ENCODE measurements at regions of chr2 and their contacts with region 1.

Region 1: GRCh38 chr2:25606892-25607291 is 66.5 kb downstream of the DTNB start:
- DNase-seq: no peak
- ATAC-seq: no peak
- H3K4me3 Mint-ChIP-seq: no peak overlapping the region
- H3K27ac Mint-ChIP-seq: no peak overlapping the region
- H3K4me1 Mint-ChIP-seq: peaks cover 20% of the 10 kb centered on the region
- H3K27me3 Mint-ChIP-seq: no peaks in the 10 kb centered on the region

Region 2: DNA sequence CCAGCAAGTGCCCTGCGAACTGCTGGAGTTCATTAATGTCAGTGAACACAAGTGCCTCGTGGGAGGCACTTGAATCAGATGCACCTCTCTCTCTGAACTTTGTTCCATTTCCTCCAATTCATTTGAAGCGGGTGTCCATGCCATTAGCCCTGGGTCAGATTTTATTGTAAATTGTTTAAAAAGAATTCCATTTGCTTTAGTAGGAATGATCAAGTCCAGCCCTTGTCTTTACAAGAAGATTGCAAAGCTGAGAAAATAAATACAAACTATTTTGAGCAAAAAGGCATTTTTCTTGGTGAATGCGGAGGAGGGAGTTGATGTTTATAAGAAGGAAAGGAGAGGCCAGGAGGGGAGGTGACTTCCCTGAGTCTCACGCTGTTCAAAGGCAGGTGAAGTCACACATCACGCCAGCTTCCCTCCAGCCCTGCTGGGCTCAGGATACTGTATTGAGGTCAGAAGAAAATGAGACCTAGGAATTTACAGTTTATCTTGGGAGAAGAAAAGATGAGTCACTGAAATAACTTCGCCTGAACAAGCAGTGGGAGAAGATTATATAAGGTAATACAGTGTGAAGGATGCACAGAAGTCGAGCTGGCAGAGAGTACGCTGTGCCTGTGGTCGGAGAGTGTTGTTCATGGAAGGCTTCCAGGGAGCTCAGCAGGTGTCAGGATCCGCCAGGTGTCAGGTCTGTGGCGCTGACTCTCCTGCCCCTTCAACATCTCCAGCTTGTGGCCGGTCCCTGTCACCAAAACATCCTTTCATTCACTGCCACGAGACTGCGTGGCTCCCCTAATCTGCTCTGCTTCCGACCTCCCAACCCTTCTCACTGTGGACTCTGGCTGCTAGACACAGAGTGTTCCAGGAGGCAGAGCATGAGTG is 528.5 kb before region 1 on chr2:
- CTCF ChIA-PET with region 1: no interaction called
- DNase-seq: no peak
- ATAC-seq: no peak
- H3K4me3 Mint-ChIP-seq: no peak overlapping the region
- H3K27ac Mint-ChIP-seq: no peak overlapping the region
- H3K4me1 Mint-ChIP-seq: no peaks in the 10 kb centered on the region
- H3K27me3 Mint-ChIP-seq: peaks cover 44% of the 10 kb centered on the region

Region 3: GRCh38 chr2:25473758-25474340 is 133.0 kb before region 1 on chr2:
- CTCF ChIA-PET with region 1: no interaction called
- DNase-seq: no peak
- ATAC-seq: no peak
- H3K4me3 Mint-ChIP-seq: no peak overlapping the region
- H3K27ac Mint-ChIP-seq: no peak overlapping the region
- H3K4me1 Mint-ChIP-seq: no peaks in the 10 kb centered on the region
- H3K27me3 Mint-ChIP-seq: no peaks in the 10 kb centered on the region

Region 4: GRCh38 chr2:25664183-25664964 is 57.5 kb after region 1 on chr2:
- CTCF ChIA-PET with region 1: interaction called, 18 read pairs
- DNase-seq: peak; percentile 43
- ATAC-seq: no peak
- H3K4me3 Mint-ChIP-seq: no peak overlapping the region
- H3K27ac Mint-ChIP-seq: no peak overlapping the region
- H3K4me1 Mint-ChIP-seq: peaks cover 3% of the 10 kb centered on the region
- H3K27me3 Mint-ChIP-seq: no peaks in the 10 kb centered on the region

Region 5: DNA sequence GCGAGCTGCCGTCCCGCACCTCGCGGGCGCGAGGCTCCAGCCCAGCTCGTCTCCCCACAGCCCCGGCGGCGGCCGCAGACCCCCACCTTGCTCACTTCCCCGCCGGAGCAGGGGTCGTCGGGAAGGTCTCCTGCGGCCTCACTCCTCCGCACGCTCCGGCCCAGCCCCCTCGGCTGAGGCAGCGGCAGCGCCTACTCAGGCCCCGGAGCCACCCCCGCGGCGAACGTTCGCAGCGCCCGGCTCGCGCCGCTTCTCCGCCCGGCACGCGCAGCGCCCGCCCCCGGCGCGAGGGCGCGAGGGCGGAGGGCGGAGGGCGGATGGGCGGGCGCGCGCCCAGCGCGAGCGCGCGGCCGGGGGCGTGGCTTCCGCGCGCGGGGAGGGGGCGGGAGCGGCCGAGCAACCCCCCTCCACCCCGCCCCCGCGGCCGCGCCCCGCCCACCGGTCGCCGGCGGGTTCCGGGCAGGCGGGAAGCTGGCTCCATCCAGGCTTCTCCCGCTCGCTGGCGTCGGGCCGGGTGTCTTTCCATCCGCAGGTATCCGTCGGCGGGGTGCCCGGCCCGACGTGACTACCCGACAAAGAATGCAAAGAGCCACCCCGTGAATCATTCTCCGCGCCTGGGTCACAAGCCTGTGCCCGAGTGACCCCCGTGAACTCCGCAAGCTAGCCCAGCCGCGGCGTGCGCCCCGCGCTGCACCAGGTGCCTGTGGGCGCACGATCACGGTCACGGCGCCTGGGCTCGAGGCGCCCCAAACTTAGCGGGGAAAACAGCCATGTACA is 66.6 kb after region 1 on chr2 and contains the start of gene DTNB:
- CTCF ChIA-PET with region 1: interaction called, 20 read pairs
- DNase-seq: peak; percentile 82
- ATAC-seq: peak; percentile 84
- H3K4me3 Mint-ChIP-seq: peak within 1 kb of the TSS; percentile 80
- H3K27ac Mint-ChIP-seq: peak within 1 kb of the TSS; percentile 69
- H3K4me1 Mint-ChIP-seq: peaks cover 27% of the 10 kb centered on the region
- H3K27me3 Mint-ChIP-seq: peaks cover 22% of the 10 kb centered on the region
- total RNA-seq, gene DTNB: 23.7 to 49.8 TPM

Region 6: DNA sequence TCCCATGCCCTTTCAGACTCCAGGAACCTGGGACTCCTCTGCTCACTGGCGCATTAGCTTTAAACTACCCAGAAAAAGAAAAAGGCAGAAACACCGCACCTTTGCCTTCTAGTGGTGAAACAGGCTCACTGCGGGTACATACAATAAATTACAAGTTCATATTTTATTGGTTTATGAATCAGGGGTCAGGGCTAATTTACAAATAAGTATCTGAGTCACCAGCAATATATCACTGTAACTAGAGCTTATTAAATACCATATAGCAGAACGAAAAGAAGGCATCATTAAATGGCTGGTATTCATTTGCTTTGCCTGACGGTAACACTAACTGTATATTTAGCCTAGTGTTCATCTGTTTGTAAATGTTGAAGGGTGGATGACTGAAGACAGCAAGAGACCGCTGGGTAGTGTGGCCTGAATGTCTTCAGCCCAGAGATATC is 93.3 kb after region 1 on chr2:
- CTCF ChIA-PET with region 1: interaction called, 66 read pairs
- DNase-seq: peak; percentile 54
- ATAC-seq: peak; percentile 48
- H3K4me3 Mint-ChIP-seq: no peak overlapping the region
- H3K27ac Mint-ChIP-seq: no peak overlapping the region
- H3K4me1 Mint-ChIP-seq: peaks cover 5% of the 10 kb centered on the region
- H3K27me3 Mint-ChIP-seq: peaks cover 2% of the 10 kb centered on the region

Measured in activated CD8-positive, alpha-beta memory T cell treated with anti-CD3 and anti-CD28 coated beads, Interleukin-2, amount 10 ng/mL, durations not matched to agents 7 days and 5 days (primary cell).